Adrenal gland (tissue), 19 donors: ENCODE measurements at regions of chr2 and their contacts with region 1.

Region 1: GRCh38 chr2:33516456-33516995 is 40.1 kb downstream of the RASGRP3 start:
- DNase-seq: no peak
- H3K4me3 ChIP-seq: no peak overlapping the region
- H3K27ac ChIP-seq: no peak overlapping the region
- H3K4me1 ChIP-seq: no peaks in the 10 kb centered on the region
- H3K27me3 ChIP-seq: no peaks in the 10 kb centered on the region
- CTCF ChIP-seq: no peak
- POLR2A ChIP-seq: no peak

Region 2: GRCh38 chr2:33498291-33498956 is 18.1 kb before region 1 on chr2:
- intact Hi-C with region 1: loop called in 1 of 2 experiments (anchors 2 kb)
- DNase-seq: no peak
- H3K4me3 ChIP-seq: no peak overlapping the region
- H3K27ac ChIP-seq: no peak overlapping the region
- H3K4me1 ChIP-seq: peaks cover 0 to 4% of the 10 kb centered on the region in 2 donors
- H3K27me3 ChIP-seq: no peaks in the 10 kb centered on the region
- CTCF ChIP-seq: no peak
- POLR2A ChIP-seq: no peak